ENCODE measurements at regions of chr16 and their contacts with region 1.

Region 1: DNA sequence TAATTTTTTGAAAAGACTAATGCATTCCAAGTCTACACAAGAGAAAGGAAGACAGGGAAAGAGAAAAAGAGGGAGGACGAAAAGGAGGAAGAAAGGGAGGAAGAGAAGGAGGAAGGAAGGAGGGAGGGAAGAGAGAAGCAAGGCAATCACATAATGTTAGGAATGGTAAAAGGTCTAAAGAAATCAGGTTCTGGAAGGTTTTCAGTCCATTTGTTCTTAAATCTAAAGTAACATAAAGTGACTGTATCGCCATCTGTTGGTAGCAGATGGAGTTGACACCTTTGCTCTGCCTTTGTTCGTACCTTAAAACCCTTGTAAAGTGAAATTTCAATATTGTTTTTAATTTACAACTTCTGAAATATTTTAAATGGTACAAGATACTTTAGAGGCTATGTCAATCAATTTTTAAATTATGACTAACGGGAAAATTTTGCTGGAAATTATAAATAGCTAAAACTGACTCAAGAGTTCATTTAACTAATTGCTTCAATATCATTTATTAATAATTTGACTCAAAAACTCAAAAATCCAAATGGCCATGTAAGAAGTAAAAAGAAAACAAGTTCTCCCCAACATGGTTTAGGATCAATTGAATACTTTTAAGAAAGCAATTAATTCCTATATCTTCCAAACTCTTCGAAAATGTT is 20.4 kb upstream of the CDYL2 start:
- DNase-seq: peak; percentile 37
- CTCF ChIP-seq: peak; percentile 62

Region 2: DNA sequence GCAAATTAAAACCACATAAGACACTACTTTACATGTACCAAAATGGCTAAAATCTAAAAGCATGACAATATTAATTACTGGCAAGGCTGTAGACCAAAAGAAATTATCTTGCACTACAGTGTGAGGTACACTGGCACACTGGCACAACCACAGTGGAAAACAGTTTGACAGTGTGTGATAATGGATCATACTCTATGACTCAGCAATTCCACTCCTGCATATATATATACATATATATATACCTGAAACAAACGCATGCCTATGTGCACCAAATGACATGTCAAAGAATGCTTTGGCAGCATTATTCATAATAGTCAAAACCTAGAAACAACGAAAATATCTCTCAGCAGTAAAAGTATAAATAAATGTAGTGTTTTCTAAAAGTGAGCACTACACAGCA is 288.6 kb before region 1 on chr16:
- in situ Hi-C with region 1: loop called (anchors 10 kb)
- DNase-seq: no peak
- CTCF ChIP-seq: no peak

Region 3: GRCh38 chr16:80710918-80711317 is 113.9 kb before region 1 on chr16:
- in situ Hi-C with region 1: no loop called
- DNase-seq: peak; percentile 35
- CTCF ChIP-seq: no peak

Region 4: GRCh38 chr16:80974649-80975376 is 150.0 kb after region 1 on chr16:
- in situ Hi-C with region 1: no loop called
- DNase-seq: no peak
- CTCF ChIP-seq: peak; percentile 37